Gastrocnemius medialis (tissue), 4 donors: ENCODE measurements at regions of chr1 and their contacts with region 1.

Region 1: GRCh38 chr1:1200851-1201810 is 5.3 kb downstream of the TNFRSF18 start:
- DNase-seq: no peak
- ATAC-seq: no peak
- H3K4me3 ChIP-seq: peak overlapping the region in 3 of 4 donors; percentile 31 to 50 (median 35)
- H3K27ac ChIP-seq: peak overlapping the region in 1 of 4 donors; percentile 21
- H3K4me1 ChIP-seq: peaks cover 0 to 5% of the 10 kb centered on the region in 2 donors
- H3K27me3 ChIP-seq: peaks cover 13 to 15% (median 15%) of the 10 kb centered on the region in 3 donors
- CTCF ChIP-seq: no peak
- POLR2A ChIP-seq: peak in 1 of 2 donors; percentile 9

Region 2: DNA sequence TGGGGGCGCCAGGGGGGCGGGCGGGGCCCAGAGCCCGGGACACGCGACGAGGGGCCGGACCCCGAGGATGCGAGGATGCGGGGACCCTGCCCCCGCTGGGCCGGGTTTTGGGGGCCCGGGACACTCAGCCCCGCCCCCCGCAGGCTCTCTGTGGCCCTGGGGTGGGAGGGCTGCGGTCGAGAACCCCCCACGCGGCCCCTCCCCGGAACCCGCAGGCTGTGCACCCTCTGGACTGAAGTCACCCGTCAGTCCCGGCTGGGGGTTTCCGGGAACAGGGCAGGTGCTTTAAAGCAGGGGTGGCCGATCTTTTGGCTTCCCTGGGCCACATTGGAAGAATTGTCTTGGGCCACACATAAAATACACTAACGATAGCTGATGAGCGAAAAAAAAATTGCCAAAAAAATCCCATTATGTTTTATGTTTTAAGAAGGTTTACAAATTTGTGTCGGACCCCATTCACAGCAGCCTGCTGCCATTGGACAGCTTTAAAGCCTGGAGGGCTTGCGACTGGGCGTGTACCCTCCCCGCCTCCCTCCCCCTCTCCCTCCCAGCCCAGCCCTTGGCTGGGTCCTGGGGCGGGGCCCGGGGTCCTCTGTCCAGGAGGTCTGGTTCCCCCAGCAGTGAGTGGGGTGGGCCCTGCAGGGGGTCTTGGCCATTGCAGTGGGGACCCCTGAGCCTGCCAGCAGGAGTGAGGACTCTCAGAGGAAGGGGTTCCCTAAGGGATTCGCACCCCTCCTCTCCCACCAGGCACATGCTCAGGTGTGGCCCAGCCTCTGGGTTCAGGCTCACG is 63.7 kb before region 1 on chr1:
- in situ Hi-C with region 1: no loop called
- intact Hi-C with region 1: loop called (anchors 10 kb)
- DNase-seq: no peak
- ATAC-seq: no peak
- H3K4me3 ChIP-seq: no peak overlapping the region
- H3K27ac ChIP-seq: no peak overlapping the region
- H3K4me1 ChIP-seq: no peaks in the 10 kb centered on the region
- H3K27me3 ChIP-seq: peaks cover 14 to 27% (median 25%) of the 10 kb centered on the region in 3 donors
- CTCF ChIP-seq: no peak
- POLR2A ChIP-seq: no peak